GM10248 (cell line): ENCODE measurements at regions of chr15 and their contacts with region 1.

Region 1: DNA sequence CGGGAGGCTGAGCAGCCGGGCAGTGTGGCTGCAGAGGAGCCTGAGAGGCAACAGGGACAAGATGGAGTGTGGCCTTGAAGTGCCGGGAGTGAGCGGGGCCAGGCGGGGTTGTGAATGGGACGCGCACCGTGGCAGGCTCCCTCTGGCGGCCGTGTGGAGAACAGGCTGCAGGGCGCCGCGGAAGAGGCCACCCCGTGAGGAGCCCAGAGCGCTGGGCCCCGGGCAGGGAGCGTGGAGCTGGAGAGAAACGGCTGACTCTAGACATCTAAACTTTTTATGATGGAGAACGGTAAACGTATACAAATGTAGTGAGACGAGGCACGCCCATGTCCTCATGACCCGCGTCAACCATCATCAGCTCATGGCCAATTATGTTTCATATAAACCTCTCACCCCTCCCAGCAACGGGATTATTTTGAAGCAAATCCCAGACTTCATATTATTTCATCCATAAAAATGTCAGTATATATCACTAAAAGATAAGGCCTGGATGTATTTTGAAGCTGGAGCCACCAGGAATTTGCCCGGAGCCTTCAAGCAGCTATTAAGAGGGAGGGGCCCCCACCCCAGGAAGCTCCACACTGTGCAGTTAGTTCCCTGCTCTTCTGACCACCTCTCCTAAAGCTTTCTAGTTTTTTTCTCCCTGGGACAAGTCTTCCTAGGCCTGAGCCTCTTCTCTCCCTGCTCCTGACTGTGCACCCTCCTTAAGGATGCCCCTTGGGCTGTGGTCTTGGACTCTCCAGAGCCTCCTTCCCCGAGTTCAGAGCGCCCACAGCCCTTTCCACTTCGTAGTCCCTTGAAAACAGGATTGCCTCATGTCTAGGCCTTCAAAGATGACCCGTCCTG is 149.4 kb downstream of the SMAD6 start:
- DNase-seq: peak; percentile 91
- CTCF ChIP-seq: peak; percentile 92

Region 2: DNA sequence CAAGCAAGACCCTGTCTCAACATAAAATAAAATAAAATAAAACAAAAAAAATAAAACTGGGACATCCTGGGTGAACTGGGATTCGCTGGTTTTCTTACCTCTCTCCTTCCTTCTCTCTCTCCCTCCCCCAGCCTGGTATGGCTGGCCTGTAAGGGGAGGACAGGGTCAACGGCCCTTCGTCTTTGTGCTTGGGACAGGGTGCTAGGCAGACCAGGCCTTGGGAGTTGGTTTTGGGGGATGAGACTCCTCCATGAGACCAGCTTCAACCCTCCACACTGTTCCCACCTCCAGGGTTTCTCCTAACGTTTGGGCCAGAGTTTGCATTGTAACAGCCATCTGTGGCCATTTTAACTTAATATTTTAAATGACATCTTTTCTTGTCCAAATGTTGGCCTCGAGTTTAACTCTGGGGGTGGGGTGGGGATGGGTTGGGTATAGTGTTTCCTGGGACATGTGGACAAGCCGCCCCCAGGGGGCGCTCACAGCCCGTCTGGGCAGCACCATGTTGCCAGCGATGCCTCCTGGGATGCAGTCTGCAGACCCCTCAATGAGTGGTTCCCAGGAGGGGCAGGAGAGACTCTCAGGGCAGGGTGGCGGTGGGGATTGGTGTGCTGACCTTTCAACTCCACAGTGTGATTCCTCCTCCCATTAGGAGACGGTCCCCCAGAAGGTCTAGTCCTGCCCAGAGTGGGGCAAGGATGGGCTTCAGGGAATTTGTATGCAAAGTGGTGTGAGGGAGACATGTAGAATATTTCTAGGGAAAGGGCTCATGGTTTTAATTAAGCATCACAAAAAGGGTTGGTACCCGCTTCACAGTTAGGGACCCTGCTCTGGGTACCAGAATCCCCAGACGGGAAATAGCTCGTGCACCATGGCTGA is 247.9 kb before region 1 on chr15:
- CTCF ChIA-PET with region 1: interaction called, 47 read pairs
- POLR2A ChIA-PET with region 1: no interaction called
- DNase-seq: peak; percentile 79
- CTCF ChIP-seq: peak; percentile 65

Region 3: GRCh38 chr15:66619151-66619903 is 232.1 kb before region 1 on chr15:
- CTCF ChIA-PET with region 1: interaction called, 37 read pairs
- POLR2A ChIA-PET with region 1: no interaction called
- DNase-seq: peak; percentile 78
- CTCF ChIP-seq: peak; percentile 72

Region 4: GRCh38 chr15:66797921-66798320 is 53.5 kb before region 1 on chr15:
- CTCF ChIA-PET with region 1: no interaction called
- POLR2A ChIA-PET with region 1: no interaction called
- DNase-seq: no peak
- CTCF ChIP-seq: no peak

Region 5: DNA sequence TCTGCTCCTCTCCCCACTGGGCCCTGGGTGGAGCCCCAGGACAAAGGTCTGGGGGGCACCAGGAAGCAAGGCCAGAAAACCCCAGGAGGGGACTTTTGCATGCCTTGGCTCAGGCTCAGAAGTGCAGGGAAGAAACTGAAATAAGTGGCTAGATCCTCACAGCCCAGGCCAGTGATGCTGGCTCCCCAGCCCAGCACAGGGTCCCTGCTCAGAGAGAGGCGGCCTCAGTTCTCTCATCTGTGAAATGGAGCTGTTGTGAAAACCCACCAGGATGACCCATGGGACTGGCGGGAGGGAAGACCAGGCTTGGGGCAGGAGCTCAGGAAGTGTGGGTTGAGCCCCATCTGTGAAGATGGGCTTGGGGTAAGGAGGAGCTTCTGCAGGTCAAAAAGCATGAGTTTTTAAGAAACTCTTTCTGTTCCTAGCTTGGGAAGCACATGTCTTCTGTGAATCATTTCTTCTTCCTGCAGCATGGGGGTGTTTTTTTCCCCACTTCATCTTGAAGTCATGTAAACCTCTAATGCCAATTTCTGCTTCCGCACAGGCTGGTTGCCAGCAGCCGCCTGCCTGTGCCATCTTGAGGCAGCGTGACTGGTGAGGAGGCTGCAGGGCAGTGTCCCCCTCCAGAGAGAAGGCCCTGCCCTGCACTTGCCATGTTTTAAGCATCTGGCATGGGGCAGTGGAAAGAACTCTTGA is 30.8 kb before region 1 on chr15:
- CTCF ChIA-PET with region 1: interaction called, 22 read pairs
- POLR2A ChIA-PET with region 1: no interaction called
- DNase-seq: no peak
- CTCF ChIP-seq: no peak

Region 6: GRCh38 chr15:66862878-66863335 is 11.5 kb after region 1 on chr15:
- CTCF ChIA-PET with region 1: interaction called, 34 read pairs
- POLR2A ChIA-PET with region 1: no interaction called
- DNase-seq: peak; percentile 80
- CTCF ChIP-seq: peak; percentile 95